ENCODE measurements at regions of chr3 and their contacts with region 1.

Region 1: DNA sequence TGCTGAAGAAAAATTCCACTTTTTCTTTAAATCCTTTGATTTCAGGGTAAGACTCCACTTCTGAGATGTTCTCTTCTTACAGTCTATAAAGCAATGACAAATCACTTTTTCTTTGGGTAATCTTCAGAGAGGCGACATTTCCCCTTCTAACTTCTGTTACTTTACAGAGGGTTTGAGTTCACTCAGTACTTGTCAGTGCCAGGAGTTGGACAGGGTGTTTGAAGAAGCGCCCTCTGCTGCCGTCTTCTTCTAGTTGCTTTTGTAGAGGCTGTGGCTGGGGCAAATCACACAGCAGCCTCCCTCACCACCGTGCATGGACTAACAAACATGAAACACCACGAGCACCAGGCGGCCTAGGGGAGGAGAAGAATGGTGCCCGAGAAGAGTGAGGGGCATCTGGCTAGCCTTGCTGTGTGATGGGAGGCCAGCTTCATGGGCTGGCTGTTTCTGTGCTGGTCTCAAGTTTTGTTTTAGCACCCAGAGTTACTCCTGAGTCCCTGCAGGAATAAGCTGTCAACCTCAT is at the start of gene CD80:
- DNase-seq: peak; percentile 82
- ATAC-seq: peak; percentile 72
- H3K4me3 ChIP-seq: peak within 1 kb of the TSS; percentile 76
- H3K27ac ChIP-seq: peak within 1 kb of the TSS; percentile 98
- H3K4me1 ChIP-seq: peaks cover 22% of the 10 kb centered on the region
- H3K27me3 ChIP-seq: no peaks in the 10 kb centered on the region
- CTCF ChIP-seq: peak; percentile 66 to 81 (median 68)
- EP300 ChIP-seq: peak in 1 of 2 experiments; percentile 22; a peak in 1 of 4 replicates
- POLR2A ChIP-seq: peak; percentile 67; the same call in 1 of the 2 replicates
- RAD21 ChIP-seq: peak; percentile 67
- polyA plus RNA-seq, gene CD80: 42.5 to 54.1 TPM

Region 2: GRCh38 chr3:119279101-119279554 is 280.4 kb before region 1 on chr3:
- CTCF ChIA-PET with region 1: no interaction called
- POLR2A ChIA-PET with region 1: no interaction called
- RAD21 ChIA-PET with region 1: interaction called, 4 read pairs
- SMC1A ChIA-PET with region 1: interaction called, 9 read pairs
- in situ Hi-C with region 1: no loop called
- intact Hi-C with region 1: loop called (anchors 5 kb)
- DNase-seq: no peak
- ATAC-seq: no peak; the same call in 2 of the 3 replicates
- H3K4me3 ChIP-seq: no peak overlapping the region
- H3K27ac ChIP-seq: no peak overlapping the region
- H3K4me1 ChIP-seq: no peaks in the 10 kb centered on the region; the same call in 1 of the 2 replicates
- H3K27me3 ChIP-seq: no peaks in the 10 kb centered on the region
- CTCF ChIP-seq: no peak
- EP300 ChIP-seq: no peak
- POLR2A ChIP-seq: no peak
- RAD21 ChIP-seq: no peak

Region 3: GRCh38 chr3:119346076-119346496 is 213.4 kb before region 1 on chr3:
- CTCF ChIA-PET with region 1: no interaction called
- POLR2A ChIA-PET with region 1: no interaction called
- RAD21 ChIA-PET with region 1: no interaction called
- SMC1A ChIA-PET with region 1: no interaction called
- in situ Hi-C with region 1: no loop called
- intact Hi-C with region 1: no loop called
- DNase-seq: no peak
- ATAC-seq: no peak
- H3K4me3 ChIP-seq: no peak overlapping the region
- H3K27ac ChIP-seq: no peak overlapping the region
- H3K4me1 ChIP-seq: peaks cover 18% of the 10 kb centered on the region
- H3K27me3 ChIP-seq: no peaks in the 10 kb centered on the region
- CTCF ChIP-seq: no peak
- EP300 ChIP-seq: no peak
- POLR2A ChIP-seq: no peak
- RAD21 ChIP-seq: no peak

Region 4: DNA sequence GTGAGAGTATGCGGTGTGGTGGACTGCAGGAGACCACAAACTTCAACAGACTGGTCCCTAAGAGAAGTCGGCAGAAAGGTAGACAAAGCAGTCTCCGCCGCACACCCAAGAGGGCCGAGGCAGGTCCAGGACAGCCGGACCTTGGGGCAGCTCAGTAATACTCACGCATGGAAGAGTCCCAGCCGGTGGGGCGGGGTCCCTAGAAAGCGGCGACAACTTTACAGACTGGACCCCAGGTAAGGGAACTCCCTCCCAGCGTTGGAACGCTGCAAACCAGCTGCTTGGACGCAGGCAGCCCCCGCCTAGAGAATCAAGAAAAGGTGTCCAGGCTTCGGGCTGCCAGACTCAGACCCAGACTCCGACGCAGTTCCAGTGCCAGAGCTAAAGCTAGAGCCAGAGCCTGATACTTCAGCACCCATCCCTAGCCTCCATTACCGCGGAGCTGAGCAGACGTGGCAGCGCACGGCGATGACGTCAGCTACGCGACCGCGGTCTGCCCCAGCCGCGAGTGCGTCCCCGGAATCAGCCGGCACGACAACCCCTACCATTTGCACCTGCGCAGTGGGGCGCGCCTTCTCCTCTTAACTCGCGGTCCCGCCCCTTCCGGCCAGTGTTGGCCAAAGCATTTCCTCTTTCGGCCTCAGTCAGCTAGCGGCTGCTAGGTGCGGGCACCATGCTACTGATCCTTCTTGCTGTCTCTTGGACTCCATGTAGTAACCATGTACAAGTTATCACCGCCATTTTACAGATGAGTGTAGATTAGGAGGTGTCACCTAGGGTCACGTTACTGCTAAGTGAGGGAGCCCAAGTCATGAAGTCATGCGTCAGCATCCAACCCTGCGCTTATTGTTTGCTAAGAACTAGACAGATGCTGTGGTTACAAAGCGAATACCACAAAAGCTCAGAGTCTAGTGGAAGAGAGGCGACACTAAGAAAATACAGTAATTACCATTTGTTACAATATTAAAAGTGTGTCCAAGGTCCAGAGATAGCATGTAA is 96.0 kb before region 1 on chr3 and contains the start of gene TMEM39A:
- CTCF ChIA-PET with region 1: interaction called, 10 read pairs
- POLR2A ChIA-PET with region 1: interaction called, 9 read pairs
- RAD21 ChIA-PET with region 1: interaction called, 8 read pairs
- SMC1A ChIA-PET with region 1: interaction called, 5 read pairs
- in situ Hi-C with region 1: no loop called
- intact Hi-C with region 1: loop called (anchors 2 kb)
- DNase-seq: peak; percentile 96
- ATAC-seq: peak; percentile 93
- H3K4me3 ChIP-seq: peak within 1 kb of the TSS; percentile 97
- H3K27ac ChIP-seq: peak within 1 kb of the TSS; percentile 90
- H3K4me1 ChIP-seq: peaks cover 9% of the 10 kb centered on the region
- H3K27me3 ChIP-seq: no peaks in the 10 kb centered on the region
- CTCF ChIP-seq: no peak
- EP300 ChIP-seq: peak; percentile 10 to 83; a peak in 2 of 4 replicates
- POLR2A ChIP-seq: peak; percentile 96
- RAD21 ChIP-seq: no peak
- polyA plus RNA-seq, gene TMEM39A: 10.8 to 21.2 TPM

Region 5: DNA sequence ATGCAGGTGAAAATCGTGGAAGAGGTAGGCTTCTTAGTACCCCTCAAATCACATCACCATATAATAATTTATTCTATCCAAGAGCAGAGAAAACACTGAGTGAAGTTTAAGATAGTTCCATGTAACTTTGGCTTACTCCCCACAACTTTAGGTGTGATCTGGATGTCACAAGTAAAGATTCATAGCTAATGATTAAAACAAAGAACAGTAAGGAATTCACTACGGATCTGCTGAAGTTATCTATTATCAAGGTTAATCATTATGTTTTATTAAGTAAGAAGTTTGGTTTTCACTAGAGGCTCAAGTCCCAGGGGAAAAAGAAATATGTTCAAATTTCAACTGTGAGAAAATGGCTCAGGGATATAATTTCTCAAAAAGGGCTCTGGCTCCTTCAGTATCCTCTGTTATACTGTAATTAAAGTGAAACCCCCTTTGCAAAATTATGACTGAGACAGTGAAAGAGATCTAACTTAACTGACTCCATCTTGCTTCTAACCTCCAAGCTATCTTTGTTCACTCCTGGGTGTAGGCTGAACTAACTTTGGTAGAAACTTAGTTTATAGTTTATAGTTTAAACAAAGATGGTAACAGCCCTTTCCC is 17.2 kb before region 1 on chr3:
- CTCF ChIA-PET with region 1: interaction called, 6 read pairs
- POLR2A ChIA-PET with region 1: interaction called, 4 read pairs
- RAD21 ChIA-PET with region 1: interaction called, 6 read pairs
- SMC1A ChIA-PET with region 1: interaction called, 15 read pairs
- in situ Hi-C with region 1: no loop called
- intact Hi-C with region 1: no loop called
- DNase-seq: no peak
- ATAC-seq: peak; percentile 26
- H3K4me3 ChIP-seq: 0 out of 2 replicates have a peak overlapping the region, but pooled peaks have one; percentile 17
- H3K27ac ChIP-seq: peak overlapping the region; percentile 55
- H3K4me1 ChIP-seq: peaks cover 16% of the 10 kb centered on the region
- H3K27me3 ChIP-seq: no peaks in the 10 kb centered on the region
- CTCF ChIP-seq: no peak
- EP300 ChIP-seq: no peak
- POLR2A ChIP-seq: no peak
- RAD21 ChIP-seq: no peak

Region 6: GRCh38 chr3:119588112-119588511 is 28.6 kb after region 1 on chr3:
- CTCF ChIA-PET with region 1: interaction called, 8 read pairs
- POLR2A ChIA-PET with region 1: interaction called, 13 read pairs
- RAD21 ChIA-PET with region 1: interaction called, 35 read pairs
- SMC1A ChIA-PET with region 1: interaction called, 15 read pairs
- in situ Hi-C with region 1: no loop called
- intact Hi-C with region 1: no loop called
- DNase-seq: no peak
- ATAC-seq: peak; percentile 67
- H3K4me3 ChIP-seq: no peak overlapping the region
- H3K27ac ChIP-seq: peak overlapping the region; percentile 20; the same call in 1 of the 2 replicates
- H3K4me1 ChIP-seq: peaks cover 19% of the 10 kb centered on the region
- H3K27me3 ChIP-seq: no peaks in the 10 kb centered on the region
- CTCF ChIP-seq: no peak
- EP300 ChIP-seq: 0 out of 4 replicates have a peak, but pooled peaks of 1 of the 2 experiments have one; percentile 45
- POLR2A ChIP-seq: no peak
- RAD21 ChIP-seq: no peak

Region 7: GRCh38 chr3:119637679-119638525 is 78.4 kb after region 1 on chr3:
- CTCF ChIA-PET with region 1: interaction called, 3 read pairs
- POLR2A ChIA-PET with region 1: interaction called, 7 read pairs
- RAD21 ChIA-PET with region 1: interaction called, 4 read pairs
- SMC1A ChIA-PET with region 1: interaction called, 4 read pairs
- in situ Hi-C with region 1: no loop called
- intact Hi-C with region 1: loop called (anchors 1 kb)
- DNase-seq: peak; percentile 82
- ATAC-seq: peak; percentile 62
- H3K4me3 ChIP-seq: peak overlapping the region; percentile 21; the same call in 1 of the 2 replicates
- H3K27ac ChIP-seq: peak overlapping the region; percentile 96
- H3K4me1 ChIP-seq: peaks cover 37% of the 10 kb centered on the region
- H3K27me3 ChIP-seq: no peaks in the 10 kb centered on the region
- CTCF ChIP-seq: no peak
- EP300 ChIP-seq: peak; percentile 16 to 29; a peak in 1 of 4 replicates
- POLR2A ChIP-seq: no peak
- RAD21 ChIP-seq: no peak

Region 8: DNA sequence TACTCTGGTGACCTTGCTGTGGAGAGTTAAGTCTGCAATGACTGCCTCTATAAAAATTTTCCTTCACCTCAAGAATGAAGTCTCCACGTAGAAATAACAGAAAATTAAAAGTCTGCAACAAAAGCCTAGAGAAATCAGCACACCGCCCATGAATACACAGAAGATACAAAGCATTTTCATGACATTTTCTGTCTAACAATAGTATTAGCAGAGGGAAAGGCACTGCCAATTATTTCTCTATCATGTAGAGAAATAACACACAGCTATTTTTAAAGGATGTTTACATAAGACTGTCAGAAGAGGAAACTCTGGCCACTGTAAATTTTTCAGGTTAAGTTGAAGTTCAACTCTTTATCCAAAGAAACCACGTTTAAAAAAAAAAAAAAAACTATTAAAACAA is 454.0 kb after region 1 on chr3:
- CTCF ChIA-PET with region 1: no interaction called
- POLR2A ChIA-PET with region 1: no interaction called
- RAD21 ChIA-PET with region 1: no interaction called
- SMC1A ChIA-PET with region 1: no interaction called
- in situ Hi-C with region 1: no loop called
- intact Hi-C with region 1: no loop called
- DNase-seq: no peak
- ATAC-seq: no peak
- H3K4me3 ChIP-seq: no peak overlapping the region
- H3K27ac ChIP-seq: no peak overlapping the region
- H3K4me1 ChIP-seq: peaks cover 6% of the 10 kb centered on the region
- H3K27me3 ChIP-seq: no peaks in the 10 kb centered on the region
- CTCF ChIP-seq: no peak
- EP300 ChIP-seq: no peak
- POLR2A ChIP-seq: no peak
- RAD21 ChIP-seq: no peak

Region 9: GRCh38 chr3:120289636-120290035 is 730.1 kb after region 1 on chr3:
- CTCF ChIA-PET with region 1: no interaction called
- POLR2A ChIA-PET with region 1: no interaction called
- RAD21 ChIA-PET with region 1: no interaction called
- SMC1A ChIA-PET with region 1: no interaction called
- in situ Hi-C with region 1: no loop called
- intact Hi-C with region 1: no loop called
- DNase-seq: no peak
- ATAC-seq: no peak
- H3K4me3 ChIP-seq: no peak overlapping the region
- H3K27ac ChIP-seq: no peak overlapping the region
- H3K4me1 ChIP-seq: no peaks in the 10 kb centered on the region
- H3K27me3 ChIP-seq: peaks cover 0 to 5% of the 10 kb centered on the region in 2 experiments; a peak in 3 of 4 replicates
- CTCF ChIP-seq: no peak
- EP300 ChIP-seq: no peak
- POLR2A ChIP-seq: no peak
- RAD21 ChIP-seq: no peak